Heart left ventricle (tissue), 16 donors: ENCODE measurements at regions of chr17 and their contacts with region 1.

Region 1: DNA sequence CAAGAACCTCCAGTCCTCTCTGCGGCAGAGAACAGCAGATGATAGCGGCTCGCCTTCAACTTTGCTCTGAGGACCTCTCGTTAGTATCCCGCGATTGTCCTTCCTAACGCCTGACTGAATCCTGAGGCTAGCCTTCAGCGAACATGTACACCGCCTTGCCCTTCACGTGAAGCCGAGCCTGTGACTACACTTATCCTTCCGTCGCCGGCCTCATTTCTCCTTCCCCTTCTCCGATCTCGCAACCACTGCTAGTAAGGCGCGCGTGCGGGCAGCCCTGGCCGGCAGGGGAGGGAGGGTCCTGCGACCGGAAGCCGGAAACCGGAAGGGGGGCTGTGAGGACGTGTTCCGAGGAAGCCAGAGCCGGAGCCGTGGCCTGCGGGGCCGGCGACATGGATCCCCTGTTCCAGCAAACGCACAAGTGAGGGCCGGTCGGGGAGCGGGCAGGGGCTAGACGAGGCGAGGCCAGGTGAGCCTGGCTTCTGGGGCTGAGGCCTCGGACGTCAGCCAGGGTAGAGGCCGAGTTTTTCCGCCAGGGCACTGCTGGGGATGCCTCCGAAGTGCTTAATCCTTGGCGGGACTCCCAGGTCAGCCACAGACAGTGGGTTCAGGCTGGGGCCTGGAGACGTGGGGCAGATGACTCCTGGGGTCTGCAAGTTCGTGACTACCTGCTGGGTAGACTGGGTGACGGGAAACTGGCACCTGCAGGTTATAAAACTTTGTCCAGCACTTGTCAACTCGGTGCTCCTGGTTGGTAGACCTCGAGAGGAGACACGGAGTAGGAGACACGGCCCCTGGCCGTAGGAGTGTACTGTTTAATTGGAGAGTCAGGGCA is at the start of gene GOSR2:
- DNase-seq: peak; percentile 88 to 96 (median 93)
- ATAC-seq: peak; percentile 95 to 99 (median 99)
- H3K4me3 ChIP-seq: peak within 1 kb of the TSS; percentile 64 to 98 (median 80)
- H3K27ac ChIP-seq: peak within 1 kb of the TSS; percentile 91 to 100 (median 98)
- H3K4me1 ChIP-seq: peaks cover 0 to 47% (median 25%) of the 10 kb centered on the region in 12 donors
- H3K27me3 ChIP-seq: no peaks in the 10 kb centered on the region
- CTCF ChIP-seq: no peak
- POLR2A ChIP-seq: peak in 1 of 2 donors; percentile 86
- total RNA-seq, gene GOSR2: 20.9 to 55.1 (median 38.4) TPM

Region 2: DNA sequence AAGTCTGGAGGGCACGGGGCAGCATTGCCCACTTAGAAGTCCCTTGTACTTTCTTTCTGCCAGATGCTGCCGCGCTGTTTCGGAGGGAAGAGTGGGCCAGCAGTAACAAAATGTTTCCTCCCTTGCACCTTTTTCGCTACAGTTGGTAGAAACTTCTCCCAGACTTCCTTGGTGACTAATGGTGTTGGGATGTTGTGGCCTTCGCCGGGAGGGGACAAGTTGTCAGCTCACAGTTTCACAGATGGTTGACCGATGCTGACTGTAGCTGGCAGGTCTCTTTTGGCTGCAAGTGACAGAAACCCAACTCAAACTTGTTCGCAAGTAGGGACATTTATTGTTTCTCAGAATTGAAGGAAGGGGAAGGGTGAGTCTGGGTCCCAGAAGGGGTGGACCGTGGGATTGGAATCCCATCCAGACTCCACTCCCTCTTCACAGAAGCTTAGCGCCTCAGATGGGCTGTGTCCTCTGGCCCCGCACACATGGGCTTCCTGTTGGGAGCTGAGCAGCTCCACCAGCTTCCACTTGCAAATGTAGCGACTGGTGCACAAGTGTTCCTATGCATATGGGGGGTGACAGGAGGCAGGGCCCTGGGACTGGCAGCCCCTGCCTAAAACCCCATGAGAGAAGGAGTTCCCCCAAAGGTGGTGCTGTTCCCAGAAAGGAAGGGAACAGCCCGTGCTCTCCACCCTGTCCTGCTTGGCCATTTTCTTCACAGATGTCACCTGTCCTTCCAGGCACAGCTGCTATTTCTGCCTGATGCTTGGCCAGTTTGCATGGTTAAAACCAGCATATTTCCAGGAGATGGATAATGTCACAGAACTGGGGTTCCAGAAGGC is 87.0 kb after region 1 on chr17:
- intact Hi-C with region 1: no loop called
- DNase-seq: peak in 3 of 5 donors; percentile 18 to 53 (median 43)
- ATAC-seq: peak; percentile 76 to 84 (median 80)
- H3K4me3 ChIP-seq: no peak overlapping the region
- H3K27ac ChIP-seq: peak overlapping the region in 10 of 12 donors; percentile 16 to 67 (median 62)
- H3K4me1 ChIP-seq: peaks cover 0 to 12% (median 0%) of the 10 kb centered on the region in 12 donors
- H3K27me3 ChIP-seq: no peaks in the 10 kb centered on the region
- CTCF ChIP-seq: no peak
- POLR2A ChIP-seq: no peak

Region 3: GRCh38 chr17:47066841-47067682 is 144.0 kb after region 1 on chr17:
- intact Hi-C with region 1: loop called in 1 of 10 experiments (anchors 1 kb)
- DNase-seq: peak; percentile 81 to 89 (median 85)
- ATAC-seq: peak; percentile 95 to 98 (median 96)
- H3K4me3 ChIP-seq: peak overlapping the region; percentile 51 to 93 (median 81)
- H3K27ac ChIP-seq: peak overlapping the region; percentile 75 to 92 (median 88)
- H3K4me1 ChIP-seq: peaks cover 2 to 35% (median 12%) of the 10 kb centered on the region in 12 donors
- H3K27me3 ChIP-seq: no peaks in the 10 kb centered on the region
- CTCF ChIP-seq: peak in 6 of 12 donors; percentile 11 to 38 (median 24)
- POLR2A ChIP-seq: peak in 1 of 2 donors; percentile 53